ENCODE measurements at regions of chr20 and their contacts with region 1.

Region 1: DNA sequence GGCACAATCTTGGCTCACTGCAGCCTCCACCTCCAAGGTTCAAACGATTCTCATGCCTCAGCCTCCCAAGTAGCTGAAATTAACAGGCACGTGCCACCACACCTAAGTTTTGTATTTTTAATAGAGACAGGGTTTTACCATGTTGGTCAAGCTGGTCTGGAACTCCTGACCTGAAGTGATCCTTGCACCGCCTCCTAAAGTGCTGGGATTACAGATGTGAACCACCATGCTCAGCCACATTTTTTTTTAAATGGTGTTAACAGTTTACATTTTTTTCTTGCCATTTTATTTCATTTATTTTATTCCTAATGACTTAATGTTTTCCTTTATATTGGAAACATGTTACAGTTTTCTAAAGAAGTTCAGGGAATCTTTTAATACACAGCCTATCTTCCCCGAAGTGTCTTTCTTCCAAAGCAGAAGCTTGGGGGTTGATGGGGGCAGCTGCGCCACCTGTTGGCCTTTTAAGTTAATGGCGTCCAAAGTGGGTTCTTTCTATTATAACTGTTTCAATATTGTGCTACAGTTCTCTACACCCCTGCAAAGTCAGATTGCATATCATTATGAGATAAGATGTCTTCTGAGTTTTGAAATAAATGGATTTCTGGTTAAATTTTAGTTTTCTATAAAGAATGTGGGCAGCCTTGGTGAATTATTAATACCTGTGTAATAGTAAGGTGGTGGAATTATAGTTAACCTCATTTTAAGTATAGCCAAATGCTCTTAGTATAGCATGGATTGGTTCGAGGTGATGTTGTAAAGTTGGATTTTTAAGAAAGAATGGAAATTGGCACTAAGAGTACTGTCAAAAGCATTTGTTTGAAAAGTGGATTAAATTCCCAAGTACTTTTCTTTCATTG is 42.0 kb upstream of the PLCG1 start:
- DNase-seq: peak in 1 of 2 donors; percentile 73
- H3K4me3 ChIP-seq: no peak overlapping the region
- H3K27ac ChIP-seq: no peak overlapping the region
- H3K4me1 ChIP-seq: no peaks in the 10 kb centered on the region
- H3K27me3 ChIP-seq: no peaks in the 10 kb centered on the region
- CTCF ChIP-seq: peak; percentile 71 to 89 (median 85)

Region 2: GRCh38 chr20:40990542-40991120 is 104.7 kb before region 1 on chr20:
- intact Hi-C with region 1: loop called (anchors 1 kb)
- DNase-seq: peak in 1 of 2 donors; percentile 89
- H3K4me3 ChIP-seq: no peak overlapping the region
- H3K27ac ChIP-seq: no peak overlapping the region
- H3K4me1 ChIP-seq: no peaks in the 10 kb centered on the region
- H3K27me3 ChIP-seq: no peaks in the 10 kb centered on the region
- CTCF ChIP-seq: peak; percentile 78 to 85 (median 80)

Region 3: DNA sequence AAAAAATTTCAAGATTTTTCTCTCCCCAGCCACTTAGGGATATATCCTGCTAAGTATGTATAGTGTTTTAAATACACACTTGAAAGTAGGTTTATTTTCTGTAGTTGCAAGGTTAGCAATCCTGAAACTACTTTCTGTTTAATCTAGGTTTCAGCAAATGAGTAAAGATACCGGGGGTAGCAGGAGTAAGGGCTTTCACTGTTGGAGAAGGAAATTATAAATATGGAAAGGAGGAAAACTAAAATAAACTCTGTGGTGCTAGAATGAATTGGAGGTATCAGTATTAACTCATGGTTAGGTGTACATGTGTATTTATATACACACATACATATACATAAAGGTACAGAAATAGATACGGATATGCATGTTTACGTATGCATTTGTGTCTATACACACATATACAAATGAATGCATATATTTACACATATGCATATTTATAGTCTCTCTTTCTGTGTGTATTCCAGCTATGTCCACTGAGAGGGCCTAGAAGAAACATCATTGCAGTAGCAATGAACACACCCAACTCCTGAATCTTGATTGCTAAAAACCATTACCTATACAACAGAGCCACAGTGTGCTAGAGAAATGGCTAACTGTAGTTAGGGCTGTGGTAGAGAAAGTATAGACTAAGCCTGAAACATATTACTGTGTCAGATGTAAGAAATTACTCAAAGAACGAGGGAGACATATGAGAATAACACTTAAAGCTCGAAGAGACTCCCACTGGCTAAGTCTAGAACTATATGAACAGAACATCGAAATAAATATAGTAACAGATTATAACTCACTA is 367.2 kb after region 1 on chr20:
- intact Hi-C with region 1: no loop called
- DNase-seq: no peak
- H3K4me3 ChIP-seq: no peak overlapping the region
- H3K27ac ChIP-seq: no peak overlapping the region
- H3K4me1 ChIP-seq: no peaks in the 10 kb centered on the region
- H3K27me3 ChIP-seq: no peaks in the 10 kb centered on the region
- CTCF ChIP-seq: no peak

Region 4: GRCh38 chr20:41487872-41488271 is 392.5 kb after region 1 on chr20:
- intact Hi-C with region 1: no loop called
- DNase-seq: no peak
- H3K4me3 ChIP-seq: no peak overlapping the region
- H3K27ac ChIP-seq: no peak overlapping the region
- H3K4me1 ChIP-seq: no peaks in the 10 kb centered on the region
- H3K27me3 ChIP-seq: no peaks in the 10 kb centered on the region
- CTCF ChIP-seq: no peak

Region 5: GRCh38 chr20:41927189-41927588 is 831.8 kb after region 1 on chr20:
- intact Hi-C with region 1: no loop called
- DNase-seq: no peak
- H3K4me3 ChIP-seq: no peak overlapping the region
- H3K27ac ChIP-seq: no peak overlapping the region
- H3K4me1 ChIP-seq: no peaks in the 10 kb centered on the region
- H3K27me3 ChIP-seq: no peaks in the 10 kb centered on the region
- CTCF ChIP-seq: no peak